ENCODE measurements at regions of chr16 and their contacts with region 1.

Region 1: GRCh38 chr16:53111078-53111791 is 56.4 kb downstream of the CHD9 start:
- DNase-seq: no peak
- H3K4me3 ChIP-seq: no peak overlapping the region
- H3K27ac ChIP-seq: no peak overlapping the region
- H3K4me1 ChIP-seq: no peaks in the 10 kb centered on the region
- H3K27me3 ChIP-seq: no peaks in the 10 kb centered on the region
- CTCF ChIP-seq: no peak
- POLR2A ChIP-seq: no peak

Region 2: GRCh38 chr16:53123747-53124146 is 12.5 kb after region 1 on chr16:
- intact Hi-C with region 1: loop called (anchors 2 kb)
- DNase-seq: no peak
- H3K4me3 ChIP-seq: no peak overlapping the region
- H3K27ac ChIP-seq: no peak overlapping the region
- H3K4me1 ChIP-seq: no peaks in the 10 kb centered on the region
- H3K27me3 ChIP-seq: no peaks in the 10 kb centered on the region
- CTCF ChIP-seq: no peak
- POLR2A ChIP-seq: no peak